GM10248 (cell line): ENCODE measurements at regions of chr16 and their contacts with region 1.

Region 1: DNA sequence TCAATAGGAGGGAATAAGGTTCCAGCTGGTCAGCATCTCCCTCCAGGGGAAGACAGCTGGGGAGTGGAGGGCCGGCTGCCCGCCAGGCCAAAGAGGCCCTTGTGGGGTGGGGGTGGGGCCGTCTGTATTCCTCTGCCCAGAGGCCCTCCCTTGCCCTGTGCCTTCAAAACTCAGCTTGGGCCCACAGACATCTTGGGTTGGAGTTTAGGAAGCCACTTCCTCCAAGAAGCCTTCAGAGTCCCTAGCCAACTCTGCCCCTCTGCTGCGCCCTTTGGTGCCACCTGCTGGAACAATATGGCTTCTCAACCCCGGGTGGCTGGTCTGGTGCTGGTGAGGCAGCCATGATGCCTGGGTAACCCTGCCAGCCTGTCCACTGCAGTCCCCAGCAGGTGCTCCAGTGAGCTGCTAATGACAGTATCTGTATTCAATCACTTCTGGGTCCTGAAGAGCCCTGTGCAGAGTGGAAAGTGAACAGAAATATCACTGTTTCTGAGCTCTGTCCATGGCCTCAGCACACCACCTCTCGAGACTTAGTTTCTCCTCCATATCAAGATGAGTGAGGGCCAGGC is 16.7 kb downstream of the HSD11B2 start:
- DNase-seq: peak; percentile 79
- CTCF ChIP-seq: peak; percentile 62

Region 2: GRCh38 chr16:67091906-67092566 is 355.6 kb before region 1 on chr16:
- CTCF ChIA-PET with region 1: no interaction called
- POLR2A ChIA-PET with region 1: no interaction called
- DNase-seq: no peak
- CTCF ChIP-seq: no peak

Region 3: GRCh38 chr16:67437513-67437912 is 10.1 kb before region 1 on chr16:
- CTCF ChIA-PET with region 1: interaction called, 16 read pairs
- POLR2A ChIA-PET with region 1: interaction called, 3 read pairs
- DNase-seq: no peak
- CTCF ChIP-seq: no peak

Region 4: GRCh38 chr16:67461600-67462592 is 14.3 kb after region 1 on chr16:
- CTCF ChIA-PET with region 1: interaction called, 26 read pairs
- POLR2A ChIA-PET with region 1: no interaction called
- DNase-seq: no peak
- CTCF ChIP-seq: no peak